Activated CD4-positive, alpha-beta memory T cell treated with anti-CD3 and anti-CD28 coated beads, Interleukin-2, amount 10 ng/mL, durations not matched to agents 7 days and 5 days (primary cell): ENCODE measurements at regions of chr10 and their contacts with region 1.

Region 1: DNA sequence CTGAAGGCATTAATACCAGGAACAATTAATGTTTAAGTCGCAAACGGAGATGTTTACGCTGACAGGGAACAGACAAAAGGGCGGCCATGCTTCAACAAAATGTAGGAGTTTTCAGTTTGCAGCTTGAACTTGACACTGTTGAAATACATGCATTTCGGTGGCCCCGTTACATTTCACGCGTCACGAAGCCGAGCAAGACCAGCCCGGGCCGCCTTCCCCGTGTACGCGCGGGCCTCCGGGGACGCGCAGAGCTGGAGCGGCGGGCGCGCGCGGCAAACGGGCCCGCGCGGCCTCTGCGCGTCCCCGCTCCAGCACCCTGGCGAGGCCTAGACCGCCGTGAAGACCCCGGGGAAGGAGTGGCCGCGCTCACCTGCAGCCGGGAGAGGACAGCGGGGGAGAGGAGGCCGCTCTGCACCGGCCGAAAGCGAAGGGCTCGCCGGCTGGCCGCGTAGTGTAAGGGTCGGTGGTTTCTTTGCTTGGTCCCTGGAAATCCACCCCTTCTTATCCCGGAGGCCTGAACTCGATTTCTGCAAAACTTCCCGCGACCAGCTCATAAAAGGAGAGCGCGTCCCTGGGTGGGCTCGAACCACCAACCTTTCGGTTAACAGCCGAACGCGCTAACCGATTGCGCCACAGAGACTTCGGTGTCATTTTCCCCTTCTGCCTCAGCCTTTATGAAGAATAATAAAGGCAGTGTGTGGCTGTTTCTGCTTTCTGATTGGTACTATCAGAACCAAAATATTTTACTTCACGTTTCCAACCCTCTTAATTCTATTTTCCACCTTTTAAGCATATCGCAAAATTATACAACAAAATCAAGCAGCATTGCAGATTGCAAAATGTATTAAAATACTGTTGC is 11.4 kb upstream of the EBLN1 start:
- DNase-seq: peak; percentile 83
- H3K4me3 Mint-ChIP-seq: peak overlapping the region; percentile 76
- H3K27ac Mint-ChIP-seq: peak overlapping the region; percentile 95
- H3K4me1 Mint-ChIP-seq: peaks cover 27% of the 10 kb centered on the region
- H3K27me3 Mint-ChIP-seq: peaks cover 20% of the 10 kb centered on the region

Region 2: DNA sequence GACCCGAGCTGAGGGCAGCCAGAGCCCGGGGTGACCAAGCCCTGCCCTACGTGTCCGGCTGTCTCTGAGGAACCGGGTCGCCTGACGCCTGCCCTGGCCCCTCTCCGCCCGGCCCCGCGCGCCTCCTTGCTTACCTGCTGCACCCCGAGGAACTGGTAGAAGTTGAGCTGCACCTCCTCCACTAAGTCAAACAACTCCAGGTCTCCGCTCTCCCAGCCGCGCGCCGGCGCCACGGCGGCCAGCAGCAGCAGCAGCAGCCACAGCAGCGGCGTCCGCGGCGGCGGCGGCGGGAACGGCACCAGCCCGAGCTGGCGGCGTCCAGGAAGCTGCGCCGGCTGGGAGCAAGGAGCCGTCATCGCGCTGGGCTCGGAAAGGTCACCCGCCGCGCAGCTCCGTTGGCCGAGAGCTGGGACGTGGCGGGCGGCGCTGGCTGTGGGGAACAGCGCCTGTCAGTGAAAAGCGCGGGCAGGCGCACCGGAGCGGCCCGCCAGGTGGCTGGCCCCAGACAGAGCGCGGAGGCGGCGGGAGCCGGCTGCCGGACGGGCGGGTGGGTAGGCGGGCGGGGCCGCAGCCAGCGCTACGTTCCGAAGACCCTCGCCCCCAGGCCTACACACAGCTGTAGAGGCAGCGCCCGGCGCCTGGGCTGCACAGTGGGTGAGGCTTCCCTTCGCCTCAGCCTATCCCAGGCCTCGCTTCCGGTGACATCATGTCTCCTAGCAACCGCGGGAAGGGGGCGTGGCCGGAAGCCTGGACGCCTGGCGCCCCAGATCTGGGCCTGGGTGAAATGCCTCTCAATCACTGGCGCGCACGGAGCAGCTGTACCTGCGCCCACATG is 225.9 kb before region 1 on chr10 and contains the start of gene DNAJC1:
- CTCF ChIA-PET with region 1: no interaction called
- POLR2A ChIA-PET with region 1: interaction called, 26 read pairs
- DNase-seq: peak; percentile 98
- H3K4me3 Mint-ChIP-seq: peak within 1 kb of the TSS; percentile 96
- H3K27ac Mint-ChIP-seq: peak within 1 kb of the TSS; percentile 93
- H3K4me1 Mint-ChIP-seq: peaks cover 30% of the 10 kb centered on the region
- H3K27me3 Mint-ChIP-seq: peaks cover 9% of the 10 kb centered on the region
- total RNA-seq, gene DNAJC1: 35.7 to 38.9 TPM

Region 3: DNA sequence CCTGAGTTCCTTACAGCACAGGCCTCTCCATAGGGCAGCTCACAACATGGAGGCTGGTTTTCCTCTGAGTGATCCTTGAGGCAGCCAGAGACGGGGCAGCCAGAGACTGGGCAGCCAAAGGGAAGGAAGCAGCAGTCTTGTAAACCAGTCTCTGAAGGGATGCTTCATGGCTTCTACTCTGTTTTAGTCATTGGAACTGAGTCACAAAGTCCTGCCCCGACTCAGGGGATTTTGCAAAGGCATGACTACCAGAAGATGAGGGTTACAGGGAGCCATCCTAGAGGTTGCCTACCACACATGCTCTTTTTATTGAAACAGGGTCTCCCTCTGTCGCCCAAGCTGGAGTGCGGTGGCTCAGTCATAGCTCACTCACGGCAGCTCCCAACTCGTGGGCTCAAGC is 42.6 kb after region 1 on chr10:
- CTCF ChIA-PET with region 1: no interaction called
- POLR2A ChIA-PET with region 1: no interaction called
- DNase-seq: no peak
- H3K4me3 Mint-ChIP-seq: no peak overlapping the region
- H3K27ac Mint-ChIP-seq: no peak overlapping the region
- H3K4me1 Mint-ChIP-seq: no peaks in the 10 kb centered on the region
- H3K27me3 Mint-ChIP-seq: peaks cover 3% of the 10 kb centered on the region

Region 4: DNA sequence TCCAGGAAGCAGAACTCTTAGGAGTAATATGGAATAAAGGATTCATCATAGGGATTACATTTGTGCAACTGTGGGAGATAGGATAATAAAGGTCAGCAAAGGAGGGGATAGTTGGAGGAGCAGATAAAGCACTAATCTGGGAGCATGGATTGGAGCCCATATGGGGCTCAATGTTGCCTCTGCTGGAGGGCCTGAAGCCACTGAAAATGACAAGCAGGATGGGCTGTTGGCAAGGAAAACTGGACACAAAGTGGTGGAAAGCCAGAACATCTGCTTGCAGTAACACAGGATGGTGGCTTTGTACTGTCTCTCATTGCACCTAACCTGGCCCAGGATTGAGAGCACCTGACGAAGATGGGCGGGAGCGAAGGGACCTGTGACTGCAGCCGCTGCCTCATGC is 72.0 kb after region 1 on chr10:
- CTCF ChIA-PET with region 1: no interaction called
- POLR2A ChIA-PET with region 1: no interaction called
- DNase-seq: no peak
- H3K4me3 Mint-ChIP-seq: no peak overlapping the region
- H3K27ac Mint-ChIP-seq: no peak overlapping the region
- H3K4me1 Mint-ChIP-seq: no peaks in the 10 kb centered on the region
- H3K27me3 Mint-ChIP-seq: no peaks in the 10 kb centered on the region

Region 5: DNA sequence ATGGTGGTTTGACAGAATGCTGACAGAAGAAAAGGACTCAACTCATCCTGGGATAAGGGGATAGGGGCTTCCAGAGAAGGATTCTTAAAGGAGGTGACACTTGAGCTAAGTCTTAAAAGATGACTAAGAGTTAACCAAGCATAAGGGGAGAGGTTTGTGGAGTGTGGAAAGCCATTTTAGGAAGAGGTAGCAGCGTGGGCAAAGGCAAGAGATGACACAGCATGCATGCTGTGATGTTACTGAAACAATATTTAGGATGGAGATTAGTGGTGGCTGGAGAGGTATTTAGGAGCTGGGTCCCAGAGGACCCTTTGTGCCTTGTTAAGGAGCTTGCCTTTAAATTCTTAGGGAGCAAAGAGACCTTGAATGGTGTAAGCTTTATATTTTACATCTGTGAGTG is 181.2 kb after region 1 on chr10:
- CTCF ChIA-PET with region 1: no interaction called
- POLR2A ChIA-PET with region 1: no interaction called
- DNase-seq: no peak
- H3K4me3 Mint-ChIP-seq: no peak overlapping the region
- H3K27ac Mint-ChIP-seq: no peak overlapping the region
- H3K4me1 Mint-ChIP-seq: no peaks in the 10 kb centered on the region
- H3K27me3 Mint-ChIP-seq: peaks cover 10% of the 10 kb centered on the region